ENCODE measurements at regions of chr19 and their contacts with region 1.

Region 1: GRCh38 chr19:38596057-38596981 is 21.4 kb downstream of the MAP4K1 start:
- DNase-seq: peak; percentile 62 to 83
- ATAC-seq: peak; percentile 78 to 84
- H3K4me3 ChIP-seq: peak overlapping the region in 3 of 4 donors; percentile 9 to 56 (median 16)
- H3K27ac ChIP-seq: peak overlapping the region in 3 of 4 donors; percentile 35 to 59 (median 52)
- H3K4me1 ChIP-seq: peaks cover 0 to 4% of the 10 kb centered on the region in 2 donors
- H3K27me3 ChIP-seq: no peaks in the 10 kb centered on the region
- CTCF ChIP-seq: no peak
- POLR2A ChIP-seq: peak in 1 of 2 donors; percentile 14

Region 2: GRCh38 chr19:38544034-38544958 is 52.0 kb before region 1 on chr19:
- in situ Hi-C with region 1: no loop called
- intact Hi-C with region 1: loop called (anchors 10 kb)
- DNase-seq: peak; percentile 69 to 84
- ATAC-seq: peak; percentile 90 to 93
- H3K4me3 ChIP-seq: peak overlapping the region in 1 of 4 donors; percentile 16
- H3K27ac ChIP-seq: peak overlapping the region; percentile 56 to 77 (median 60)
- H3K4me1 ChIP-seq: peaks cover 8 to 9% of the 10 kb centered on the region in 2 donors
- H3K27me3 ChIP-seq: no peaks in the 10 kb centered on the region
- CTCF ChIP-seq: peak in 4 of 5 experiments; percentile 20 to 50 (median 26)
- POLR2A ChIP-seq: no peak

Region 3: GRCh38 chr19:38634757-38635482 is 38.6 kb after region 1 on chr19:
- in situ Hi-C with region 1: no loop called
- intact Hi-C with region 1: no loop called
- DNase-seq: no peak
- ATAC-seq: peak; percentile 43 to 66
- H3K4me3 ChIP-seq: no peak overlapping the region
- H3K27ac ChIP-seq: peak overlapping the region; percentile 4 to 64 (median 47)
- H3K4me1 ChIP-seq: peaks cover 0 to 11% of the 10 kb centered on the region in 2 donors
- H3K27me3 ChIP-seq: no peaks in the 10 kb centered on the region
- CTCF ChIP-seq: peak; percentile 77 to 94 (median 92)
- POLR2A ChIP-seq: no peak

Measured in gastrocnemius medialis (tissue), 4 donors.